CD8-positive, alpha-beta T cell (primary cell): ENCODE measurements at regions of chr6 and their contacts with region 1.

Region 1: GRCh38 chr6:42928986-42929820 is at the start of gene CNPY3:
- DNase-seq: peak; percentile 91 to 98 (median 94)
- ATAC-seq: peak; percentile 77
- H3K4me3 ChIP-seq: peak within 1 kb of the TSS; percentile 70 to 82
- H3K4me3 Mint-ChIP-seq: peak within 1 kb of the TSS; percentile 99
- H3K27ac ChIP-seq: peak within 1 kb of the TSS; percentile 93 to 95
- H3K27ac Mint-ChIP-seq: peak within 1 kb of the TSS; percentile 98
- H3K4me1 ChIP-seq: peaks cover 43% of the 10 kb centered on the region
- H3K4me1 Mint-ChIP-seq: peaks cover 45% of the 10 kb centered on the region
- H3K27me3 ChIP-seq: no peaks in the 10 kb centered on the region
- H3K27me3 Mint-ChIP-seq: no peaks in the 10 kb centered on the region
- CTCF ChIP-seq: no peak
- total RNA-seq, gene CNPY3: 43.9 to 47.4 TPM

Region 2: GRCh38 chr6:42294759-42295158 is 634.4 kb before region 1 on chr6:
- CTCF ChIA-PET with region 1: no interaction called
- POLR2A ChIA-PET with region 1: no interaction called
- intact Hi-C with region 1: no loop called
- DNase-seq: peak in 2 of 9 experiments; percentile 25 to 52
- ATAC-seq: peak; percentile 33
- H3K4me3 ChIP-seq: no peak overlapping the region
- H3K4me3 Mint-ChIP-seq: peak overlapping the region; percentile 44
- H3K27ac ChIP-seq: peak overlapping the region in 1 of 2 experiments; percentile 65
- H3K27ac Mint-ChIP-seq: peak overlapping the region; percentile 78
- H3K4me1 ChIP-seq: peaks cover 55% of the 10 kb centered on the region
- H3K4me1 Mint-ChIP-seq: peaks cover 63% of the 10 kb centered on the region
- H3K27me3 ChIP-seq: no peaks in the 10 kb centered on the region
- H3K27me3 Mint-ChIP-seq: no peaks in the 10 kb centered on the region
- CTCF ChIP-seq: no peak

Region 3: GRCh38 chr6:42890311-42891198 is 38.6 kb before region 1 on chr6:
- CTCF ChIA-PET with region 1: no interaction called
- POLR2A ChIA-PET with region 1: interaction called, 6 read pairs
- intact Hi-C with region 1: loop called in 1 of 2 experiments (anchors 5 kb)
- DNase-seq: peak; percentile 77 to 94 (median 90)
- ATAC-seq: peak; percentile 95
- H3K4me3 ChIP-seq: peak overlapping the region; percentile 92 to 99
- H3K4me3 Mint-ChIP-seq: peak overlapping the region; percentile 92
- H3K27ac ChIP-seq: peak overlapping the region; percentile 91
- H3K27ac Mint-ChIP-seq: peak overlapping the region; percentile 95
- H3K4me1 ChIP-seq: peaks cover 10% of the 10 kb centered on the region
- H3K4me1 Mint-ChIP-seq: peaks cover 19% of the 10 kb centered on the region
- H3K27me3 ChIP-seq: no peaks in the 10 kb centered on the region
- H3K27me3 Mint-ChIP-seq: no peaks in the 10 kb centered on the region
- CTCF ChIP-seq: no peak

Region 4: DNA sequence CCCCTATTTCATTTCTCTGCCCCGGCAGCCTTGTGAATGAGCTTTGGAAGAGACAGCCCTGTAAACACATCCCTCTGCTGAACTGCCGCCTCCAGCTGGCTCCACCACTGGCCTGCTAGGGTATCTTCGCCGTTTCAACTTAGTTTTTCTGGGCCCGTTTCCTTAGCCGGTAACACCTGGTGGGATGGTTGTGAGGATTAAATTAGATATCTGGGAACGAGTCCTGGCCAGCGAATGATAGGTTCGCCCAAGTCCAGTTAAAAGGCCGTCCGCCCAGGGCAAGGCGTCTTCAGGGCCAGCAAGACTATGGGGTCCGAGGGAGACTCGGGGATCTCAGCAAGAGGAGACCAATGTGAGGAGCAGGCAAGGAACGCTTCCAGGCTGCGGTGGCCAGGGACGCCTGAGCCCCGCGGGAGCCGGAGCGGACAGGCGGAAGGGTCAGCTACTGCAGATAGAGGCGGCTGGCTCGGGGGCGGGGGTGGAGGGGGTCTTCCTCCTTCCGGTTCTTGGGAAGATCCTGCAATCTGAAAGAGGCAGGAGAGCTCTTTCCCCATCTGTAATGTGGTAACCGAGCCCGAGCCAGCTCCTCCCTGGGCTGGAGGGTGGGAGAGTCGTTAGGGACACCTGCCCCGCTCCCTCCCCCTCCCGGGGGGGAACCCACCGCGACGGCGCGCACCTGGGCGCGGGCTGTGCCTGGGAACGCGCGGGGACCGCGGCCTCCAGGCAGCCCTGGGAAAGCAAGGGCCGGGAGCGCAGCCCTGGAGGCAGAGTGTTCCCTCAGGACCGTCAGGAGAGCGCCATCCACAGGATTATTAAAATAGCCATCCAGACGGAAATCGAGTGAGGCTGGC is 17.8 kb before region 1 on chr6:
- CTCF ChIA-PET with region 1: interaction called, 3 read pairs
- POLR2A ChIA-PET with region 1: interaction called, 10 read pairs
- intact Hi-C with region 1: loop called in 1 of 2 experiments (anchors 2 kb)
- DNase-seq: no peak
- ATAC-seq: peak; percentile 34
- H3K4me3 ChIP-seq: peak overlapping the region; percentile 8 to 15
- H3K4me3 Mint-ChIP-seq: peak overlapping the region; percentile 78
- H3K27ac ChIP-seq: no peak overlapping the region
- H3K27ac Mint-ChIP-seq: no peak overlapping the region
- H3K4me1 ChIP-seq: no peaks in the 10 kb centered on the region
- H3K4me1 Mint-ChIP-seq: peaks cover 4% of the 10 kb centered on the region
- H3K27me3 ChIP-seq: peaks cover 0 to 4% of the 10 kb centered on the region in 2 experiments
- H3K27me3 Mint-ChIP-seq: peaks cover 14% of the 10 kb centered on the region
- CTCF ChIP-seq: no peak

Region 5: GRCh38 chr6:42984001-42984923 is 55.1 kb after region 1 on chr6 and contains the start of gene PPP2R5D:
- CTCF ChIA-PET with region 1: interaction called, 9 read pairs
- POLR2A ChIA-PET with region 1: interaction called, 73 read pairs
- intact Hi-C with region 1: loop called (anchors 1 kb)
- DNase-seq: peak; percentile 93 to 99 (median 96)
- ATAC-seq: peak; percentile 93
- H3K4me3 ChIP-seq: peak within 1 kb of the TSS; percentile 81 to 86
- H3K4me3 Mint-ChIP-seq: peak within 1 kb of the TSS; percentile 94
- H3K27ac ChIP-seq: peak within 1 kb of the TSS; percentile 78 to 86
- H3K27ac Mint-ChIP-seq: peak within 1 kb of the TSS; percentile 95
- H3K4me1 ChIP-seq: peaks cover 44% of the 10 kb centered on the region
- H3K4me1 Mint-ChIP-seq: peaks cover 62% of the 10 kb centered on the region
- H3K27me3 ChIP-seq: no peaks in the 10 kb centered on the region
- H3K27me3 Mint-ChIP-seq: no peaks in the 10 kb centered on the region
- CTCF ChIP-seq: no peak
- total RNA-seq, gene PPP2R5D: 14.1 to 19.5 TPM

Region 6: GRCh38 chr6:43021270-43022047 is 92.3 kb after region 1 on chr6 and contains the start of gene RRP36:
- CTCF ChIA-PET with region 1: no interaction called
- POLR2A ChIA-PET with region 1: interaction called, 15 read pairs
- intact Hi-C with region 1: no loop called
- DNase-seq: peak in 8 of 9 experiments; percentile 54 to 81 (median 72)
- ATAC-seq: peak; percentile 78
- H3K4me3 ChIP-seq: peak within 1 kb of the TSS; percentile 93 to 94
- H3K4me3 Mint-ChIP-seq: peak within 1 kb of the TSS; percentile 99
- H3K27ac ChIP-seq: peak within 1 kb of the TSS; percentile 78 to 83
- H3K27ac Mint-ChIP-seq: peak within 1 kb of the TSS; percentile 96
- H3K4me1 ChIP-seq: peaks cover 21% of the 10 kb centered on the region
- H3K4me1 Mint-ChIP-seq: peaks cover 44% of the 10 kb centered on the region
- H3K27me3 ChIP-seq: no peaks in the 10 kb centered on the region
- H3K27me3 Mint-ChIP-seq: no peaks in the 10 kb centered on the region
- CTCF ChIP-seq: no peak
- total RNA-seq, gene RRP36: 20.1 to 20.2 TPM

Region 7: DNA sequence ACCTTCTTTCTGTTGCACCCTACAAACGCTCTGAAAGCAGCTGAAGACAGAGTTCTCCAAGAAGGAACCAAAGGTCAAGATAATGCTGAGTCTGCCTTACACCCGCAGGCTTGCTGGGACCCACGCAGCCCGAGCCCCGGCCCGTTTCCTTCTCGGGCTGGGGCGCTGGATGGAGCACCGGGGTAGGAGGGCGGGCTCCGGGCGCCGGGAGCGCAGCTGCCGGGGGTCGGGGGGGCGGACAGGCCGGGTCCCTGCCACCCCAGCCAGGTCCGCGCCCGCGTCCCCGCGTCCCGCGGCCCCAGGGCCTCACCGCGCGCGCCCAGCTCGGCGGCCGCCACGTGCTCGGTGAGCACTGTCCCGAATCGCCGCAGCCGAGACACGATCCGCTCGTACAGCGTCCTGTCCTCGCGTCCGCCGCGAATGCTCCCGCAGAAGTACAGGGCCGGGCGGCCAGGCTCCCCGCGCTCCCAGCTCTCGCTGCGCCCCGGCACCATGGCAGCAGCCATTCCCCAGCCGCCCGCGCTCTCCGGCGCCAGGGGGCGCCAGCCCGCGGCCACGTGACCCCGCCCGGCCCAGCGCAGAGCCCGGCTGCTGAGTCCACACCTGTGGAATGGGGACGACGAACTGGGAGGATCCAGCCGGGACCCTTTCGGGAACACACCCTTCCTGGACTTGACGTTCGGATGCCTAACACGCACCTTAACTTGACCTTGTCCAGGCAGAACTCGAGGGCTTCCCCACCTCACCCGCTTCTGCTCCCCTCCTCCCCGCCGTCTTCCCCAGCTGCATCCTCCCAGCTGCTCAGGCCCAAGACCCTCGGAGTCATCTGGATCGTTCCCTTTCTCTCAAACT is 300.0 kb after region 1 on chr6 and contains the start of gene DNPH1:
- CTCF ChIA-PET with region 1: no interaction called
- POLR2A ChIA-PET with region 1: interaction called, 4 read pairs
- intact Hi-C with region 1: loop called in 1 of 2 experiments (anchors 5 kb)
- DNase-seq: peak; percentile 62 to 90 (median 79)
- ATAC-seq: peak; percentile 62
- H3K4me3 ChIP-seq: peak within 1 kb of the TSS; percentile 48 to 69
- H3K4me3 Mint-ChIP-seq: peak within 1 kb of the TSS; percentile 87
- H3K27ac ChIP-seq: peak within 1 kb of the TSS; percentile 49 to 60
- H3K27ac Mint-ChIP-seq: peak within 1 kb of the TSS; percentile 94
- H3K4me1 ChIP-seq: peaks cover 43% of the 10 kb centered on the region
- H3K4me1 Mint-ChIP-seq: peaks cover 40% of the 10 kb centered on the region
- H3K27me3 ChIP-seq: no peaks in the 10 kb centered on the region
- H3K27me3 Mint-ChIP-seq: no peaks in the 10 kb centered on the region
- CTCF ChIP-seq: peak; percentile 92
- total RNA-seq, gene DNPH1: 19.6 to 26.8 TPM